Cardiac septum (tissue), 1 donor: ENCODE measurements at regions of chr6 and their contacts with region 1.

Region 1: DNA sequence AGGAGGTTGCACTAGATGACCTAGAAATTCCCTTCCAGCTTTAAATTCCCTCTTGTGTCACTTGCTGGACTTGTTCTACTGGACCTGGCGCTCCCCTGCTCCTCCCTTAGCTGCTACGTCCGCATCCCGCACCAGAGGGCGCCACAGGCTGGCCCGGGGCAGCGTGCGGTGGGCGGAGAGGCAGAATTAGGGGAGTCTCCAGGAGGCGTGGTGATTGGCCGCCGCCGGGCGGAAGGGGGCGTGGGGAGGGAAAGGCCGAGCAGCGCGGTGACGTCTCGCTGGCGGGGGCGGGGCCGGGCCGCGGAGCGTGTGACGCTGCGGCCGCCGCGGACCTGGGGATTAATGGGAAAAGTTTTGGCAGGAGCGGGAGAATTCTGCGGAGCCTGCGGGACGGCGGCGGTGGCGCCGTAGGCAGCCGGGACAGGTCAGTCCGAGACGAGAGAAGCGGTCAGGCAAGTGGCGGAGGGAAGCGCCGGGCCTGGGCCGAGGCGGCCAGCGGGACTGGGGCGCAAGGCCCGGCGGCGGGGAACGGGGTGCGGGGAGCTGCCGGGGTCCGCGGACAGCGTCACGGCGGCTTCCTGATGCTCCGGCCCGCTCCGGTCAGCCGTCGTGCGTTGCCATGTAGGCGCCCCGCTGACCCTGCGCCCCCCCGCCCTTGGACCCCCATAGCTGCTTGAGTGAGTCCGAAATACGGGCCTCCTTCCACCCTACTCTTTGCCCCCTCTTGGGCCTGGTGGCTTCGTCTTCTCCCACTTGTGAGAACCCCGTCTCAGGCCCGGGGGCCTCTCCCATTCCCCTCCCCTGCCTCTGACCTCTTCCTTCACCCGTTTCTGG is at the start of gene PPARD:
- DNase-seq: peak; percentile 100
- total RNA-seq, gene PPARD: 19.0 TPM

Region 2: DNA sequence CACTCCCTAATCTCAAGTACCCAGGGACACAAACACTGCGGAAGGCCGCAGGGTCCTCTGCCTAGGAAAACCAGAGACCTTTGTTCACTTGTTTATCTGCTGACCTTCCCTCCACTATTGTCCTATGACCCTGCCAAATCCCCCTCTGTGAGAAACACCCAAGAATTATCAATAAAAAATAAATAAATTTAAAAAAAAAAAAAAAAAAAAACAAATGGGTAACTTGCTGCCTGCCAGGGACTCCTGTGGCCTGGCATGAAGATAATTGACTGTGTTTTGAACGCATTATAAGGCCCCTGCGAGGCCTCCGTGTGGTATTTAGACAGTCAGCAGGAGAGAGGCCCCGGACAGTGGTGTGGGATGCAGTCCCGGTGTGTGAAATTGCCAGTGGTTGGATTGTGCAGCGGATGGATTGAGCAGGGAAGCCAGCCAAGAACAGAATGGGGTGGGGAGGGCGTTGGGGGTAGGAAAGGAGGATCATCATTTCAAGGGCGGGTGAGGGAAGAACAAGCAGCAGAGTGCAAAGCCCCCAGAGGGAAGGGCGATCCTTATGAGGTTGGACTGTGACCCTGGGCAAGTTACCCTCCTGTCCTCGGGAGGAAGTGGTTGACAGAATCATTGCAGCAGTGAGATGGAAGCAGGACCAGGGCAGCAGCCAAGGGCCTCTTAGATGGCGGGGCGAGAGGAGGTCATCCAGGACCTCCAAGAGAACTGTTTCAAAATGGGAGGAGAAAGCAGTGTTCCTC is 43.2 kb after region 1 on chr6:
- intact Hi-C with region 1: no loop called
- DNase-seq: no peak

Region 3: GRCh38 chr6:35415065-35415991 is 72.9 kb after region 1 on chr6:
- intact Hi-C with region 1: loop called (anchors 1 kb)
- DNase-seq: no peak

Region 4: GRCh38 chr6:35449287-35449881 is 106.9 kb after region 1 on chr6:
- intact Hi-C with region 1: loop called (anchors 1 kb)
- DNase-seq: no peak

Region 5: GRCh38 chr6:35468181-35468979 is 125.9 kb after region 1 on chr6 and contains the start of gene RPL10A:
- intact Hi-C with region 1: loop called (anchors 5 kb)
- DNase-seq: peak; percentile 97
- total RNA-seq, gene RPL10A: 432 TPM